GM12878 (cell line): ENCODE measurements at regions of chr1 and their contacts with region 1.

Region 1: DNA sequence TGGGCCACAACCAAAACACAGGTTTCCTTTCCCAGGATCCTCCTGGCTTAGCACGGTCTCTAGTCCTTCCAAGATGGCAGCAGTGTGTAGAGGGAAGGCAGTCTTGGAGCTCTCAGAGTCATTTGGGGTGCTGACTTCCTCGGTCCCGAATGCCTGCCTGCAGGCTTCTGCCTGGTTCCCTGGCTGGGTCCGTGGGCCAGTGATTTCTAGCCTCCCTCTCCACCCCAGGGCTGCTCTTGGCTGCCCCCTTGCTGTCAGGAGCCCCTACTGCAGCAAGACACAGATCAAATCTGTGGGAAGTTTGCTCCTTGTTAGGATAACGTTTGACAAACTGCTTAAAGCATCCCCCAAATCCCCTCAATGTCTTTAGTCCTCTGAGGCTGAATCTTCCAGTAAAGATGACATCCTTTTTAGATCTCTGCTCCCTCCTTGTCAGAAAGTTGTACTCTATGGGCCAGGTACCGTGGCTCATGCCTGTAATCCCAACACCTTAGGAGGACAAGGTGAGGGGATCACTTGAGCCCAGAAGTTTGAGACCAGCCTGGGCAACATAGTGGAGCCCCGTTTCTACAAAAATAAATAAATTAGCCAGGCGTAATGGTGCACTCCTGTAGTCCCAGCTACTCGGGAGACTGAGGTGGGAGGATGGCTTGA is 272.5 kb downstream of the RRAGC start:
- DNase-seq: peak; percentile 17
- ATAC-seq: peak; percentile 91
- H3K4me3 ChIP-seq: no peak overlapping the region
- H3K27ac ChIP-seq: no peak overlapping the region
- H3K4me1 ChIP-seq: peaks cover 3% of the 10 kb centered on the region; the same call in 1 of the 2 replicates
- H3K27me3 ChIP-seq: 0 out of 4 replicates have a peak, but pooled peaks cover 0 to 1% of the 10 kb centered on the region in 2 experiments
- CTCF ChIP-seq: peak; percentile 92 to 99 (median 97)
- EP300 ChIP-seq: no peak
- POLR2A ChIP-seq: no peak
- RAD21 ChIP-seq: peak; percentile 96

Region 2: DNA sequence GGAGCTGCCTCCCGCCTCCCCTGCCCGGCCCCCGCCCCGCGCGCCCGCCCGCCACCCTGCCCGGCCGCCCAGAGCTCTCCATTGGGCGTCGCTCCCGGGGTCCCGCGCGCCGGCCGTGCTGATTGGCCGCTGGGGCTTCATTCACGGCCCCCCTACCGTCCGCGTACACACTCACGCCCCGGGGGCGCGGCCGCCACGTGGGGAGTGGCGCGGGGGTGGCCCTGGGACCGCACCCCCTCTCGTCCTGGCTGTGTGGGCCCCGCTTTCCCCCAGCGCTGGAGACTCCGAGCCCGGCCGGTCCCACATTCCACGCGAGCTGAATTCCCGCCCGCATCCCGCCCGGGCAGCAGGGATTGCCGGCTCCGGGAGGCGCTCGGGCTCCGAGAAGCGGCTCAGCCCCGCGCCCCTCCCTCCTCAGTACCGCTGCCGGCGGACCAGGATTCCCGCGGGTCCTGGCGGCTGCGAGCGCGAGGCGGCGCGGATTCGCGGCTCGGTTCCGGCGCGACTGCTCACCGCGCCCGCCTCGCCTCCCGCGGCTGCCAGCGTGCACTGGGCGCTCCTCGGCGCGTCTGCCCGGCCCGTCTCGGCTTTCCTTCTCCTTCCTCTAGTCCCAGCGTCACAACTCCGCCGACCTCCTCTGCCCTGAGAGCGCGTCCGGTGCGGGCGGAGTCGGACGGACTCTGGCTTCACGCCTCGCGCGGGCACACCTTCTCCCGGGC is 540.1 kb before region 1 on chr1:
- CTCF ChIA-PET with region 1: interaction called, 3 read pairs
- POLR2A ChIA-PET with region 1: no interaction called
- RAD21 ChIA-PET with region 1: no interaction called
- SMC1A ChIA-PET with region 1: interaction called, 5 read pairs
- in situ Hi-C with region 1: loop called (anchors 25 kb)
- intact Hi-C with region 1: loop called (anchors 2 kb)
- DNase-seq: no peak
- ATAC-seq: peak; percentile 87
- H3K4me3 ChIP-seq: peak overlapping the region; percentile 57; the same call in 1 of the 2 replicates
- H3K27ac ChIP-seq: no peak overlapping the region
- H3K4me1 ChIP-seq: peaks cover 15% of the 10 kb centered on the region
- H3K27me3 ChIP-seq: peaks cover 9 to 13% of the 10 kb centered on the region in 2 experiments
- CTCF ChIP-seq: no peak
- EP300 ChIP-seq: no peak
- POLR2A ChIP-seq: no peak
- RAD21 ChIP-seq: no peak

Region 3: GRCh38 chr1:38451541-38451993 is 135.6 kb before region 1 on chr1:
- CTCF ChIA-PET with region 1: no interaction called
- POLR2A ChIA-PET with region 1: no interaction called
- RAD21 ChIA-PET with region 1: no interaction called
- SMC1A ChIA-PET with region 1: no interaction called
- in situ Hi-C with region 1: no loop called
- intact Hi-C with region 1: no loop called
- DNase-seq: no peak
- ATAC-seq: no peak
- H3K4me3 ChIP-seq: no peak overlapping the region
- H3K27ac ChIP-seq: no peak overlapping the region
- H3K4me1 ChIP-seq: no peaks in the 10 kb centered on the region
- H3K27me3 ChIP-seq: no peaks in the 10 kb centered on the region
- CTCF ChIP-seq: no peak
- EP300 ChIP-seq: no peak
- POLR2A ChIP-seq: no peak
- RAD21 ChIP-seq: no peak

Region 4: GRCh38 chr1:38559161-38559824 is 27.8 kb before region 1 on chr1:
- CTCF ChIA-PET with region 1: interaction called, 11 read pairs
- POLR2A ChIA-PET with region 1: no interaction called
- RAD21 ChIA-PET with region 1: no interaction called
- SMC1A ChIA-PET with region 1: interaction called, 9 read pairs
- in situ Hi-C with region 1: no loop called
- intact Hi-C with region 1: no loop called
- DNase-seq: peak; percentile 84
- ATAC-seq: peak; percentile 84
- H3K4me3 ChIP-seq: peak overlapping the region; percentile 9; the same call in 1 of the 2 replicates
- H3K27ac ChIP-seq: peak overlapping the region; percentile 87
- H3K4me1 ChIP-seq: peaks cover 45% of the 10 kb centered on the region
- H3K27me3 ChIP-seq: no peaks in the 10 kb centered on the region
- CTCF ChIP-seq: no peak
- EP300 ChIP-seq: peak; percentile 88 to 91
- POLR2A ChIP-seq: no peak; the same call in 1 of the 2 replicates
- RAD21 ChIP-seq: no peak

Region 5: GRCh38 chr1:38605063-38605462 is 17.9 kb after region 1 on chr1:
- CTCF ChIA-PET with region 1: no interaction called
- POLR2A ChIA-PET with region 1: no interaction called
- RAD21 ChIA-PET with region 1: no interaction called
- SMC1A ChIA-PET with region 1: no interaction called
- in situ Hi-C with region 1: no loop called
- intact Hi-C with region 1: no loop called
- DNase-seq: no peak
- ATAC-seq: no peak
- H3K4me3 ChIP-seq: no peak overlapping the region
- H3K27ac ChIP-seq: no peak overlapping the region
- H3K4me1 ChIP-seq: no peaks in the 10 kb centered on the region
- H3K27me3 ChIP-seq: peaks cover 0 to 1% of the 10 kb centered on the region in 2 experiments; a peak in 1 of 4 replicates
- CTCF ChIP-seq: no peak
- EP300 ChIP-seq: no peak
- POLR2A ChIP-seq: no peak
- RAD21 ChIP-seq: no peak

Region 6: DNA sequence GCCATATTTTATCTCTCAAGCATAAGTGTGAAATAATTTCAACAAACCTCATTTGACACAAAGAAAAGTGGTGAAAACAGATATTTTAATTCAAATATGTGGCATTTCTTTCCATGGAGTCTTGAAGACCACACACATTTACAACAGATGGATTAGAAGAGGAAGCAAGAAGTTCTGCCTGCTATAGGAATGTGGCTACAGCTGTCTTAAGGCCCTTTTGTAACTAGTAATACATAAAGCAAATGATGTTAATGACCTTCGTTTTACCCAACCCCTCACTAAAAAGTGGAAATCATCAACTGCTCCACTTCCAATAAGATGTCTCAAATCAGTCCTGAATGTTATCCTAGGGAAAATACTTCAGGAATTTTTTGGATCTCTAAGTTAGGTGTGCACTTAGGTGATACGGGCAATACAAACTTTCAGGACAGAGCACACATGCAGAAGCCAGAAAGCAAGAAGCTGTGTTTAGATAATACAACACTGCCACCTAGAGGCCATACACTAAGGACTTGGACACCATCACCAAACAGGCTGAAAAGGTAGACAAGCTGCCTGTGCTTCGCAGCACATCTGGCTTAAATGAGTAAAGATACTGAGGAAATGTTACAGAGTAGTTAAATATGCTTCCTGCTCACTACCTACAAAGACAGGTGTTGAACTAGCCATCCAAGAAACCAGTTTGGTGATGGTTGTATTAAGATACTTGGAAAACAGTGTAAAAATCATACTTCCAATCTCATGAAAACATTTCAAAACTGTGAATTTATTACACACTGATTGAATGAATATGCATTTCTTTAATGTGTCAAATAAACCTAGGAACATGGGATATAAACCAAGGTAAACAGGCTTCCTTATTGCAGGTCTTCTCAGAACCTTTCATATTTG is 248.1 kb after region 1 on chr1:
- CTCF ChIA-PET with region 1: interaction called, 11 read pairs
- POLR2A ChIA-PET with region 1: no interaction called
- RAD21 ChIA-PET with region 1: no interaction called
- SMC1A ChIA-PET with region 1: no interaction called
- in situ Hi-C with region 1: no loop called
- intact Hi-C with region 1: no loop called
- DNase-seq: peak; percentile 60
- ATAC-seq: peak; percentile 98
- H3K4me3 ChIP-seq: no peak overlapping the region
- H3K27ac ChIP-seq: no peak overlapping the region
- H3K4me1 ChIP-seq: no peaks in the 10 kb centered on the region
- H3K27me3 ChIP-seq: peaks cover 0 to 2% of the 10 kb centered on the region in 2 experiments; a peak in 2 of 4 replicates
- CTCF ChIP-seq: peak; percentile 68 to 86 (median 77)
- EP300 ChIP-seq: no peak
- POLR2A ChIP-seq: no peak
- RAD21 ChIP-seq: peak; percentile 84